IMR-90 (cell line): ENCODE measurements at regions of chr1 and their contacts with region 1.

Region 1: GRCh38 chr1:180494370-180494769 is 8.0 kb downstream of the ACBD6 start:
- DNase-seq: no peak
- ATAC-seq: no peak
- H3K4me3 ChIP-seq: no peak overlapping the region
- H3K27ac ChIP-seq: no peak overlapping the region
- H3K4me1 ChIP-seq: peaks cover 8% of the 10 kb centered on the region
- H3K27me3 ChIP-seq: no peaks in the 10 kb centered on the region
- CTCF ChIP-seq: no peak
- POLR2A ChIP-seq: no peak
- RAD21 ChIP-seq: no peak

Region 2: DNA sequence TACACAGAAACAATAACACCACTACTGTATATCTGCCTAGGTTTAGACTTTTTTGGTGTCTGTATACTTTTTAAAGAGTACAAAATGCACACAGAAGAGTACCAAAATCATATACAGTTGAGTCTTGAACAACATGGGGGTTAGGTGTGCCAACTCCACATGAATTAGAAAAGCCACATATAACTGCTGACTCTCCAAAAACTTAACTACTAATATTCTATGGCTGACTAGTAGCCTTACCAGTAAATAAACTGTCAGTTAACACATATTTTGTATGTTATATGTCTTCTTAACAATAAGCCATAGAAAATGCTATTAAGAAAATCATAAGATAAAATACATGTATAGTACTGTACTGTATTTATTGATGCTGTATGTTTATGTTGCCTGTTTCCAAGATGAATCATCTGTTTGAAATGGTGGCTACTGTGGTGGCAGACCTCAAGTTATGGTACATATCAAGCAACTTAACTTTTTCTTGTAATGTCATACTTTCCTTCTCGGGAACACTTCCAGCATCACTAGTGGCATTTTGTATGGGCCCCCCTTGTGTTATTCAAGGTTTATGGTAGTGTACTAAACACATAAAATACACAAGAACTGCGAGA is 193.1 kb before region 1 on chr1:
- CTCF ChIA-PET with region 1: no interaction called
- POLR2A ChIA-PET with region 1: no interaction called
- dilution Hi-C with region 1: no loop called
- in situ Hi-C with region 1: no loop called
- intact Hi-C with region 1: no loop called
- DNase-seq: peak; percentile 72
- ATAC-seq: peak; percentile 89
- H3K4me3 ChIP-seq: no peak overlapping the region
- H3K27ac ChIP-seq: no peak overlapping the region
- H3K4me1 ChIP-seq: peaks cover 4% of the 10 kb centered on the region; the same call in 1 of the 2 replicates
- H3K27me3 ChIP-seq: no peaks in the 10 kb centered on the region
- CTCF ChIP-seq: no peak
- POLR2A ChIP-seq: no peak
- RAD21 ChIP-seq: no peak

Region 3: DNA sequence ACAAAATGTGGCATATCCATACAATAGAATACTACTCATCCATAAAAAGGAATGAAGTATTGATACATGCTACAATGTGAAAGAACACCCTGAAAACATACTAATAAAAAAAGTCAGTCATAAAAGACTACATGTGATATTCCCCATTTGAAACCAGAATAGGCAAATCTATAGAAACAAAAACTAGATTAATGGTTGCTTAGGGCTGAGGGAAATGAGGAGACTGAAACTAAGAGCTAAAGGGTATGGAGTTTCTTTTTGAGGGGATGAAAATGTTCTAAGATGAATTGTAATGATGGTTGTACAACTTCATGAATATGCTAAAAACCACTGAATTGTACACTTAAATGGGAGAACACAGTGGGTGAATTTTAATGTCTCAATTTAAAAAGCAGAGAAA is 42.9 kb before region 1 on chr1:
- CTCF ChIA-PET with region 1: no interaction called
- POLR2A ChIA-PET with region 1: no interaction called
- dilution Hi-C with region 1: no loop called
- in situ Hi-C with region 1: no loop called
- intact Hi-C with region 1: no loop called
- DNase-seq: no peak
- ATAC-seq: no peak
- H3K4me3 ChIP-seq: no peak overlapping the region
- H3K27ac ChIP-seq: no peak overlapping the region
- H3K4me1 ChIP-seq: no peaks in the 10 kb centered on the region
- H3K27me3 ChIP-seq: no peaks in the 10 kb centered on the region
- CTCF ChIP-seq: no peak
- POLR2A ChIP-seq: no peak
- RAD21 ChIP-seq: no peak

Region 4: GRCh38 chr1:180751921-180752320 is 257.6 kb after region 1 on chr1:
- CTCF ChIA-PET with region 1: no interaction called
- POLR2A ChIA-PET with region 1: interaction called, 11 read pairs
- dilution Hi-C with region 1: no loop called
- in situ Hi-C with region 1: no loop called
- intact Hi-C with region 1: no loop called
- DNase-seq: peak; percentile 8
- ATAC-seq: no peak; the same call in 1 of the 2 replicates
- H3K4me3 ChIP-seq: no peak overlapping the region
- H3K27ac ChIP-seq: no peak overlapping the region
- H3K4me1 ChIP-seq: no peaks in the 10 kb centered on the region
- H3K27me3 ChIP-seq: no peaks in the 10 kb centered on the region
- CTCF ChIP-seq: no peak
- POLR2A ChIP-seq: no peak
- RAD21 ChIP-seq: no peak